ENCODE measurements at regions of chr10 and their contacts with region 1.

Region 1: GRCh38 chr10:70549962-70550458 is 52.5 kb downstream of the PRF1 start:
- DNase-seq: peak; percentile 39 to 76 (median 66)
- ATAC-seq: peak; percentile 87
- H3K4me3 ChIP-seq: no peak overlapping the region
- H3K4me3 Mint-ChIP-seq: no peak overlapping the region
- H3K27ac ChIP-seq: no peak overlapping the region
- H3K27ac Mint-ChIP-seq: no peak overlapping the region
- H3K4me1 ChIP-seq: no peaks in the 10 kb centered on the region
- H3K4me1 Mint-ChIP-seq: peaks cover 0 to 4% (median 0%) of the 10 kb centered on the region in 7 donors
- H3K27me3 ChIP-seq: no peaks in the 10 kb centered on the region
- H3K27me3 Mint-ChIP-seq: no peaks in the 10 kb centered on the region

Region 2: GRCh38 chr10:70381471-70382421 is 168.3 kb before region 1 on chr10:
- CTCF ChIA-PET with region 1: no interaction called
- POLR2A ChIA-PET with region 1: no interaction called
- intact Hi-C with region 1: loop called in 1 of 2 experiments (anchors 10 kb)
- DNase-seq: peak in 6 of 9 donors; percentile 25 to 53 (median 40)
- ATAC-seq: peak; percentile 43
- H3K4me3 ChIP-seq: peak overlapping the region; percentile 94
- H3K4me3 Mint-ChIP-seq: peak overlapping the region; percentile 82 to 92 (median 90)
- H3K27ac ChIP-seq: peak overlapping the region; percentile 32
- H3K27ac Mint-ChIP-seq: peak overlapping the region in 6 of 9 donors; percentile 17 to 86 (median 46)
- H3K4me1 ChIP-seq: peaks cover 4 to 6% of the 10 kb centered on the region in 2 donors
- H3K4me1 Mint-ChIP-seq: peaks cover 2 to 20% (median 10%) of the 10 kb centered on the region in 7 donors
- H3K27me3 ChIP-seq: no peaks in the 10 kb centered on the region
- H3K27me3 Mint-ChIP-seq: no peaks in the 10 kb centered on the region

Region 3: GRCh38 chr10:70461215-70461986 is 88.6 kb before region 1 on chr10:
- CTCF ChIA-PET with region 1: interaction called, 22 read pairs
- POLR2A ChIA-PET with region 1: no interaction called
- intact Hi-C with region 1: loop called in 1 of 2 experiments (anchors 1 kb)
- DNase-seq: peak in 6 of 9 donors; percentile 29 to 52 (median 42)
- ATAC-seq: peak; percentile 69
- H3K4me3 ChIP-seq: no peak overlapping the region
- H3K4me3 Mint-ChIP-seq: peak overlapping the region in 1 of 10 donors; percentile 12
- H3K27ac ChIP-seq: no peak overlapping the region
- H3K27ac Mint-ChIP-seq: peak overlapping the region in 2 of 9 donors; percentile 10 to 66
- H3K4me1 ChIP-seq: no peaks in the 10 kb centered on the region
- H3K4me1 Mint-ChIP-seq: peaks cover 0 to 8% (median 3%) of the 10 kb centered on the region in 7 donors
- H3K27me3 ChIP-seq: peaks cover 0 to 4% of the 10 kb centered on the region in 2 donors
- H3K27me3 Mint-ChIP-seq: peaks cover 23 to 46% (median 38%) of the 10 kb centered on the region in 5 donors

Region 4: DNA sequence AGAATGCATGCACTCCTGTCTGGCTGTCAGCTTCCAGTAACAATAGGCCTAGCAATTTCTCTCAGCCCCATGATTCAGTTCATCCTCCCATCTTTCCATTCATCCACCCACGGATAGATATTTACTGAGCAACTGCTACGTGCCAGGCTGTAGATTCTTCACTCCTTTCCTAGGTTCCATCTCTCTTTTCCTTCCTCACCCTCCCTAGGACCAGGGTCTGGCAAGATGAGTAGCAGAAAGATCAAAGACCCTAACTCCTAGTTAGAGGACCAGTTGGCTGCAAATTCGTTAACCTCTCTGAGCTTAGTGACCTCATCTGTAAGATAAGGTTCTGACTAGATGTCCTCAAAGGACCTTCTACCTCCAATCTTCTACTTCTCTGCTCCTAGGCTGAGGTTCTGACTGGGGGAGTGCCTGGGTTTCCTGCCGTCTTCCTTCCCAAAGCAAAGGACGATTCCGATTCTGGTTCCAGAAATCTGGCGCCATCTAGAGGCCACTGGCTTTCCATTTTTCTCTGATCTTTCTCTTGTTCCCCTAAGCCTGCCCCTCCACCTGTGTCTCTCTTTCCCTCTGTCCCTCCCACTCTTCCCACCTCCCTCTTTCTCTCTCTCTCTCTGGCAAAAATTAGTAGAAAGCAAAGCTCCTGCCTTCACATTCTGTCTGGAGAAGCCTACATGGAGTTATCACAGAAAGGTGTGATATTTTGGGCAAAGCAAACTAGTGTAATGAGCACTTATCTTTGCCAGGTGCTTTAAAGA is 208.9 kb after region 1 on chr10:
- CTCF ChIA-PET with region 1: interaction called, 23 read pairs
- POLR2A ChIA-PET with region 1: no interaction called
- intact Hi-C with region 1: loop called (anchors 1 kb)
- DNase-seq: peak; percentile 20 to 70 (median 54)
- ATAC-seq: peak; percentile 58
- H3K4me3 ChIP-seq: no peak overlapping the region
- H3K4me3 Mint-ChIP-seq: peak overlapping the region in 1 of 10 donors; percentile 38
- H3K27ac ChIP-seq: no peak overlapping the region
- H3K27ac Mint-ChIP-seq: peak overlapping the region in 1 of 9 donors; percentile 28
- H3K4me1 ChIP-seq: no peaks in the 10 kb centered on the region
- H3K4me1 Mint-ChIP-seq: peaks cover 0 to 10% (median 0%) of the 10 kb centered on the region in 7 donors
- H3K27me3 ChIP-seq: no peaks in the 10 kb centered on the region
- H3K27me3 Mint-ChIP-seq: peaks cover 0 to 2% (median 0%) of the 10 kb centered on the region in 5 donors

Region 5: DNA sequence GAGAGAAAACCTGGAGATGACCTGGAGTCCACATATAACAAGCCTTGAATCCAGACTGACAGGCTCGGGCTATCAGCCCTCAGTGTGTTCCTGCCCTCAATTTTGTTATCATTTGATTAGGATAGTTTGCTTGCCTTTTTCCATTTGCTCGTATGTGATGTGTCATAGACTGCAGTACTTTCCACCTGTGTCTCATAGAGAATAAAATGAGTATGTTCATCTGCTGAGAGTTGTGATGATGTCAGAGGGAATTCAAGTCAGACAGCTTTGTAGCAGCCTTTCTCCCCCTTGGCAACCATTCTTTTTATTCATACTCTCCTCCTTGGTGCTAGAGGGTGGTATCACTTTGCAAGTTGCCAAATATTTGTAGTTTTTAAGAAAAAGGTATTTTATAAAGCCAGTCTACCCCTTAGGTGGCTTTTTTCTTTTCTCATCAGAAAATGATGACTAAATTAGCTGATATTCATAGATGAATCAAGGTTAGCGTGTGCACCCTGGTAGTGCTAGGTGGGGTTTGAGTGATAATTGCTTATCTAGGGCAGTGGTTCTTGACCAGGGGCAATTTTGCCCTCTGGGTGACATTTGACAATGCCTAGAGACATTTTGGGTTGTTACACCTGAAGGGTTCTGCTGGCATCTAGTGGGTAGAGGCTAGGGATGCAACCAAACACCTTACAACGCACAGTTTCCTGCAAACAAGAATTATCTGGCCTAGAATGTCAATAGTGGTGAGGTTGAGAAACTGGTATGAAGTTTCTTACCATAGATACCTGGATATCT is 271.2 kb after region 1 on chr10:
- CTCF ChIA-PET with region 1: interaction called, 3 read pairs
- POLR2A ChIA-PET with region 1: no interaction called
- intact Hi-C with region 1: loop called in 1 of 2 experiments (anchors 1 kb)
- DNase-seq: peak in 1 of 9 donors; percentile 8
- ATAC-seq: peak; percentile 32
- H3K4me3 ChIP-seq: no peak overlapping the region
- H3K4me3 Mint-ChIP-seq: no peak overlapping the region
- H3K27ac ChIP-seq: no peak overlapping the region
- H3K27ac Mint-ChIP-seq: peak overlapping the region in 2 of 9 donors; percentile 36 to 63
- H3K4me1 ChIP-seq: peaks cover 0 to 10% of the 10 kb centered on the region in 2 donors
- H3K4me1 Mint-ChIP-seq: peaks cover 16 to 43% (median 31%) of the 10 kb centered on the region in 7 donors
- H3K27me3 ChIP-seq: no peaks in the 10 kb centered on the region
- H3K27me3 Mint-ChIP-seq: no peaks in the 10 kb centered on the region

Region 6: GRCh38 chr10:70880077-70880534 is 330.1 kb after region 1 on chr10:
- CTCF ChIA-PET with region 1: interaction called, 17 read pairs
- POLR2A ChIA-PET with region 1: interaction called, 3 read pairs
- intact Hi-C with region 1: loop called (anchors 1 kb)
- DNase-seq: peak; percentile 39 to 79 (median 65)
- ATAC-seq: peak; percentile 90
- H3K4me3 ChIP-seq: no peak overlapping the region
- H3K4me3 Mint-ChIP-seq: no peak overlapping the region
- H3K27ac ChIP-seq: no peak overlapping the region
- H3K27ac Mint-ChIP-seq: no peak overlapping the region
- H3K4me1 ChIP-seq: no peaks in the 10 kb centered on the region
- H3K4me1 Mint-ChIP-seq: peaks cover 0 to 8% (median 3%) of the 10 kb centered on the region in 7 donors
- H3K27me3 ChIP-seq: no peaks in the 10 kb centered on the region
- H3K27me3 Mint-ChIP-seq: no peaks in the 10 kb centered on the region

Measured in naive thymus-derived CD4-positive, alpha-beta T cell (primary cell).